Upper lobe of right lung (tissue), 1 donor: ENCODE measurements at regions of chr1 and their contacts with region 1.

Region 1: GRCh38 chr1:165586435-165586834 is 42.6 kb downstream of the LRRC52 start:
- DNase-seq: no peak
- ATAC-seq: no peak
- H3K4me3 ChIP-seq: no peak overlapping the region
- H3K27ac ChIP-seq: no peak overlapping the region
- H3K4me1 ChIP-seq: no peaks in the 10 kb centered on the region
- H3K27me3 ChIP-seq: no peaks in the 10 kb centered on the region
- CTCF ChIP-seq: no peak

Region 2: GRCh38 chr1:165403835-165404482 is 182.5 kb before region 1 on chr1:
- intact Hi-C with region 1: loop called (anchors 5 kb)
- DNase-seq: no peak
- ATAC-seq: peak; percentile 82
- H3K4me3 ChIP-seq: no peak overlapping the region
- H3K27ac ChIP-seq: no peak overlapping the region
- H3K4me1 ChIP-seq: no peaks in the 10 kb centered on the region
- H3K27me3 ChIP-seq: no peaks in the 10 kb centered on the region
- CTCF ChIP-seq: peak; percentile 63

Region 3: GRCh38 chr1:165444897-165445370 is 141.5 kb before region 1 on chr1 and contains the start of gene RXRG:
- intact Hi-C with region 1: no loop called
- DNase-seq: peak; percentile 77
- ATAC-seq: peak; percentile 77
- H3K4me3 ChIP-seq: peak within 1 kb of the TSS; percentile 42
- H3K27ac ChIP-seq: peak within 1 kb of the TSS; percentile 52
- H3K4me1 ChIP-seq: peaks cover 10% of the 10 kb centered on the region
- H3K27me3 ChIP-seq: peaks cover 12% of the 10 kb centered on the region
- CTCF ChIP-seq: no peak
- total RNA-seq, gene RXRG: 9.1 TPM

Region 4: DNA sequence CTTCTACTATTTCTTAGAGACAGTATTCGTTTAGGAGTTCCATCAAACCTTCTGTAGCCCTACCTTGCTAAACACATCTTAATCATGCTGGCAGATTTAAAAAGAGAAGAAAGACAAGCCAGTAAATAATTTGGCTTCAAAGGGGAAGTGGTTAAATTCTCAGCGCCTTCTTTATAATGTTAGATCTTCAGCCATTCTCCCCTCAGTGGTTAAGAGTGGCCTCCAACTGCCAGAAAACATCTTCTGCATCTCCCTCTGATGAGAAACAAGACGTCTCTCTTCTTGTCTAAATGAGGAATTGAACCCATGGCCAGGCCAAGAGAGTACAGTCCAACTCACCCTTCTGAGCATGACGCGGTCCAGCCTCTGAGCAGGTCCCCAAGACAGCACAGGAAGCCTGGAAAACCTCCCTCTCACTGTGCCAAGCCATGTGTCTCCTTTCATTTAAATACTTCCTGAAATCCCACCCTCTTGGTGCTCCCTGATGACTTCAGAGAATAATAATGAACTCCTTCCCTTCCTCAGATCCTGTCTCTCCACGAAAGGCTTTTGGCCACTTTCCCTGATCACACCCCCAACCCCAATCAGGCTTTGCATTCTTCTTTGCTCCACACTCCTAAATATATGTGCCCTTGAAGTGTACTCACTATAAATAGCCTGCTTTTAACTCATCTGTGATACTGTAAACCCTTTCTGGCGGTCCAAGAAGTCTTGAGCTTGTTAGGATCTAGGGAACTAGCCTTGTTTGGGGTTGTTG is 59.0 kb before region 1 on chr1:
- intact Hi-C with region 1: no loop called
- DNase-seq: no peak
- ATAC-seq: no peak
- H3K4me3 ChIP-seq: no peak overlapping the region
- H3K27ac ChIP-seq: no peak overlapping the region
- H3K4me1 ChIP-seq: no peaks in the 10 kb centered on the region
- H3K27me3 ChIP-seq: no peaks in the 10 kb centered on the region
- CTCF ChIP-seq: no peak

Region 5: DNA sequence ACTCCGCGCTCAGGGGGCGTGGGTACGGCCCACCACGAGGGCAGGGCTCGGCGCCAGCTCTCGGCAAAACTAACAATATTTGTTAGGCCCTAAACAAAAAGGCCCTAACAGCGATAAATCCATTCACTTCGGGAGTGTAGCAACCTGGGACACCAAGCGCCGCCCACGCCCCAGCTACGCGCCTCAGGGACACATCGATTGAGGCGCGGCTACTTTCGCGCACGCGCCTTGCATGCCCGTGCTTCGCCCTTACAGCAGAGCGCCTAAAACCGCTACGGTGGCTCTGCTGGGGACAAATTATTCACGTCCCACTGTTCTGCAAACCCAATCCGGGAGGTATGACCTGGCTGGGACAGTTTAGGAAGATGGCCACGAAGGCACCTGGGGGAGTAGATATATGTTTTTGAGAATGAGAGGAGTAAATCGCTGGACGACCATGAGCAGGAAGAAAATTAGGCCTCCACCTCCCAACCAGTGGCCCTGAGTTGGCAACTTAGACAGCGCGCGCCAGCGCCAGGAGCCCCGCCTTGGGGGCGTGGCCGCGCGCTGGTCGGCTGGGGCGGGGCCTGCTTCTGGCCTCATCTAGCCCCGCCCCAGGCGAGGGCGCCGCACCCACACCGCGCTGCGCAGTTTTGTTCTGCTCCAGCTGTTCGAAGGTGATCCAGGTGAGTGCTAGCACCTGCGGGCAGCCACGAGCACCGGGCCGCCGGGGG is 44.4 kb after region 1 on chr1 and contains the start of gene MGST3:
- intact Hi-C with region 1: no loop called
- DNase-seq: peak; percentile 99
- ATAC-seq: peak; percentile 97
- H3K4me3 ChIP-seq: peak within 1 kb of the TSS; percentile 97
- H3K27ac ChIP-seq: peak within 1 kb of the TSS; percentile 86
- H3K4me1 ChIP-seq: peaks cover 32% of the 10 kb centered on the region
- H3K27me3 ChIP-seq: no peaks in the 10 kb centered on the region
- CTCF ChIP-seq: no peak
- total RNA-seq, gene MGST3: 181 TPM

Region 6: DNA sequence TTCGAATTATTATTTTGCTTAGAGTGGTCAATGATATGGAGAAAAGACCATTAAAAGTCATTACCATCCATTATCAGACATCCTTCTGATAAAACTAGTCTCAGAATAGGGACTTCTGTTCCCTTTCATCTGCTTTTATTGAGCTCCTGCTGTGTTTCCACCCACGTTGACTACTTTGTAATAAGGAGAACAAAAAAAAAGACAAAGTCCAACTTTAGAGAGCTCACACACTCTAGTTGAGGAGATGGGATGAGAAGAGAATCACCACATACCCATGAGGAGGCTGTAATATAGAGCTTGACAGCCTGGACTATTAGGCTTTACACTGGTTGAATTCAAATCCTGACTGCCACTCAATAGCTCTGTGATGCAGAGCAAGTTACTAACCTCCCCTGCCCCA is 139.7 kb after region 1 on chr1:
- intact Hi-C with region 1: no loop called
- DNase-seq: no peak
- ATAC-seq: no peak
- H3K4me3 ChIP-seq: no peak overlapping the region
- H3K27ac ChIP-seq: no peak overlapping the region
- H3K4me1 ChIP-seq: no peaks in the 10 kb centered on the region
- H3K27me3 ChIP-seq: no peaks in the 10 kb centered on the region
- CTCF ChIP-seq: no peak